Heart right ventricle (tissue), 16 donors: ENCODE measurements at regions of chr1 and their contacts with region 1.

Region 1: GRCh38 chr1:221494670-221495069 is 247.2 kb downstream of the DUSP10 start:
- DNase-seq: no peak
- ATAC-seq: no peak
- H3K4me3 ChIP-seq: no peak overlapping the region
- H3K27ac ChIP-seq: no peak overlapping the region
- H3K4me1 ChIP-seq: no peaks in the 10 kb centered on the region
- H3K27me3 ChIP-seq: no peaks in the 10 kb centered on the region
- CTCF ChIP-seq: no peak

Region 2: GRCh38 chr1:222441066-222441465 is 946.4 kb after region 1 on chr1:
- intact Hi-C with region 1: loop called in 1 of 10 experiments (anchors 10 kb)
- DNase-seq: no peak
- ATAC-seq: peak in 3 of 8 donors; percentile 61 to 70 (median 67)
- H3K4me3 ChIP-seq: no peak overlapping the region
- H3K27ac ChIP-seq: no peak overlapping the region
- H3K4me1 ChIP-seq: peaks cover 0 to 7% (median 0%) of the 10 kb centered on the region in 9 donors
- H3K27me3 ChIP-seq: no peaks in the 10 kb centered on the region
- CTCF ChIP-seq: no peak